Left ventricle myocardium inferior (tissue), 1 donor: ENCODE measurements at regions of chr10 and their contacts with region 1.

Region 1: GRCh38 chr10:95363303-95363912 is 72.6 kb upstream of the PDLIM1 start:
- DNase-seq: no peak
- H3K4me3 ChIP-seq: no peak overlapping the region
- H3K27ac ChIP-seq: peak overlapping the region; percentile 77
- H3K4me1 ChIP-seq: peaks cover 59% of the 10 kb centered on the region
- H3K27me3 ChIP-seq: no peaks in the 10 kb centered on the region
- CTCF ChIP-seq: peak; percentile 95

Region 2: DNA sequence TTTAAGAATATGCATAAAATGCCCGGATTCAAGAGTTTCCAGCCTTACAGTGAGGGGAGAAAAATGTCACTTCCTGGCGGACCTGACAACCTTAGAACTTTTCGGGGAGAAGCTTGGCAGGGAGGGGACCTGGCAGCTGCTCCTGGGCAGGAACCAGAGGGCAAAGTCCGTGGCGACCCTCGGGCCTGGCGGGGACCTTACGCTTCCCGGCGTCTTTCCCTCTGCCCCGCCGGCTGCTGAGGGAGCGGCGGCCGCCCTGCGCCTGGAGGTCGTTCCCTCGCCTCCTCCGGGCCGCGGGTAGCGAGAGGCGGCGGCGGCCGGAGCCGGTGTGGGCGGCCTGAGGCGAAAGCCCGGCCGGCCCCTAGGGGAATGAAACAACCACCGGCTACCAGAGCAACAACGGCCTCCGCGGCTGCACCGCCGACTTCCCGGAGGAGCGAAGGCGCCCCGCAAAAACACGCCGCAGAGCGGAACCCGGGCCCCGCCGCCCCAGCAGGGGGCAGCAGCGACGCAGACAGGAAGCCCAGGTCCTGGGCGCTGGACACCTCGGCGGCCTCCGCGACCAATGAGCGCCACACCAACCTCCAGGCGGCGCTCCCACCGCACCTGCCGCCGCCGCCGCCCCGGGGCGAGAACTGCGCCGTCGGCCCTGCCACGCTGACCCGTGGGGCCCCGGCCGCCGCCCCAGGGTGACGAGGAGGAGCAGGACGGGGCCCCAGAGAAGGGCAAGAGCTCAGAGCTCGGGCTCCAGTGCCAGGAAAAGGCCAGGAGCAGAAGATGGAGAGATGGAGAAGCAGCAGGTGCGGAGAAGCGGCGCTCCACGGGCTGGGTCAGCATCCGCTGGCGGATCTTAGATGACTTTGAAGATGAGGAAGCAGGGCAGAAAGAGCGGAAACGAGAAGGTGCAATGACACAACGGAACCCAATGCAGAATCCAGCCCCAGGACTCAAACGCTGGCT is 179.9 kb before region 1 on chr10:
- intact Hi-C with region 1: loop called (anchors 10 kb)
- DNase-seq: peak; percentile 88
- H3K4me3 ChIP-seq: peak overlapping the region; percentile 79
- H3K27ac ChIP-seq: peak overlapping the region; percentile 85
- H3K4me1 ChIP-seq: peaks cover 17% of the 10 kb centered on the region
- H3K27me3 ChIP-seq: no peaks in the 10 kb centered on the region
- CTCF ChIP-seq: peak; percentile 99

Region 3: DNA sequence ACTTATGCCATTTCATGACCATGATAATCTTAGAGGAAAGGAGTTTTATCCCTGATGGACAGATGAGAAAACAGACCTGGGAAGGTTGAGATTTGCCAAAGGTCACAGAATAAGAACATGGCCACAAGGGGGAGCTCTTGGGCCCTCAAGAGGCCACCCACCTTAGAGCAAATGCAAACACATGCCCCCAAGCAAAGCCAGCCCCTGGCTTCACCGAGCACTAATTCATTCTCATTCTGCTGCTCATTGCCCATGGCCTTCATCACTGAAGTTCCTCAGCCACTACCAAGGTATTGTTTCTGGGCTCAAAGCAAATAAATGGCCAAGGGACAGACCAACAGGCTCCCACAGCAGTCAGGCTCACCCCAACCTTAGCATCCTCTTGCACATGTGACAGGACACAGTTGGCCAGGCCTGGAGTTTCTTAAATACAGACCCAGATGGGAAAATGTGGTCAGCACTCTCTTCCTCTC is 116.8 kb before region 1 on chr10:
- intact Hi-C with region 1: loop called (anchors 5 kb)
- DNase-seq: peak; percentile 68
- H3K4me3 ChIP-seq: no peak overlapping the region
- H3K27ac ChIP-seq: peak overlapping the region; percentile 78
- H3K4me1 ChIP-seq: peaks cover 71% of the 10 kb centered on the region
- H3K27me3 ChIP-seq: no peaks in the 10 kb centered on the region
- CTCF ChIP-seq: peak; percentile 88

Region 4: DNA sequence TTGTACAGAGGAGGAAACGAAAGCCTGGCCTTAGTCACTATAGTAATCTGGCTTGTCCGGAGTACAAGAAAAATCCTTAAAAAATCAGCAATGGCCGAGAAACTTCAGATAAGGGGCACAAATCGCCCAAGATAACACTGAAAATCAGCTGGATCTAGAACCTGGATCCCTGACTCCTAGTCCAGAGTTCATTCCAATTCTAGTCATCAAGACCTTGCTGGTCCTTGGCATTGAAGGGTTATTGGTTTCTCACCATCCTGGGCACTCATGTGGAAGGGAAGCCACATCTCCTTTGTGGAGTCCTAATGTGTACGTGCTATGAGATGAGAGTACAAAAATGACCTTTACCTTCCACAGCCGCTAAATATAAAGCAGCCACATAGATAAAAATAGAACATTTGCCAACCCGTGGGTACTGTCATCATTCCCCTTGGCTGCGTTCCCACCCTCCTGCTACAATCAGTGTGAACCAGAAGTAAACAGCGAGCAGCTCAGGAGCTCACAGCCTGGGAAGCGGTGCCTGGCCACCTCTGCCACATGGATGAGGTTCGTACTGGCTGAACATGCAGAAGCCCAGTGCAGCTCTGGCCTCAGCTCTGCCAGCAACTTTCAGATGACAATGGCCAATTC is 43.4 kb after region 1 on chr10:
- intact Hi-C with region 1: no loop called
- DNase-seq: peak; percentile 82
- H3K4me3 ChIP-seq: peak overlapping the region; percentile 8
- H3K27ac ChIP-seq: peak overlapping the region; percentile 97
- H3K4me1 ChIP-seq: peaks cover 98% of the 10 kb centered on the region
- H3K27me3 ChIP-seq: no peaks in the 10 kb centered on the region
- CTCF ChIP-seq: no peak